Psoas muscle (tissue), 8 donors: ENCODE measurements at regions of chr2 and their contacts with region 1.

Region 1: DNA sequence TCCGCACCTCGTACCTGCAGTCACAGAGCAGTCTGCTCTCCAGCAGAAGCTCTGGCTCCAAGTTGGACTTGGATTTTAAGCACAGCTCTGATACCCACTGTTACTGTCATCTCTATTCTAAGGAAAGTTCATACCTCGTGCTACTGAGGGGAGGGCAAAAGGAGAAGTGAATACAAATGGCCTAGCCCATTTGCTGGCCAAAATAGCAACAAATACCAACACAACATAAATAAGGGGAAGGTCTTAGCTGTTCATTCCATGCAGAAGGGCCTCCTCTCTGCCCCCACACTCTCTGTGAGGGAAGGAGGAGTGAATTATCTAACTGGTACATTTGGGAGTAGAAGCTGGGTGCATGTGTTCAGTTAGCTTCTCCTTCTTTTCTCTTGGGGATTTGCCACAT is 739.4 kb upstream of the RAB6C start:
- DNase-seq: no peak
- ATAC-seq: peak in 3 of 4 donors; percentile 17 to 50 (median 45)
- H3K4me3 ChIP-seq: no peak overlapping the region
- H3K27ac ChIP-seq: peak overlapping the region; percentile 55
- H3K4me1 ChIP-seq: peaks cover 11% of the 10 kb centered on the region
- H3K27me3 ChIP-seq: no peaks in the 10 kb centered on the region
- CTCF ChIP-seq: no peak

Region 2: GRCh38 chr2:128791120-128791984 is 448.7 kb before region 1 on chr2:
- intact Hi-C with region 1: loop called in 1 of 2 experiments (anchors 5 kb)
- DNase-seq: no peak
- ATAC-seq: peak in 3 of 4 donors; percentile 16 to 26 (median 20)
- H3K4me3 ChIP-seq: no peak overlapping the region
- H3K27ac ChIP-seq: no peak overlapping the region
- H3K4me1 ChIP-seq: no peaks in the 10 kb centered on the region
- H3K27me3 ChIP-seq: no peaks in the 10 kb centered on the region
- CTCF ChIP-seq: no peak

Region 3: DNA sequence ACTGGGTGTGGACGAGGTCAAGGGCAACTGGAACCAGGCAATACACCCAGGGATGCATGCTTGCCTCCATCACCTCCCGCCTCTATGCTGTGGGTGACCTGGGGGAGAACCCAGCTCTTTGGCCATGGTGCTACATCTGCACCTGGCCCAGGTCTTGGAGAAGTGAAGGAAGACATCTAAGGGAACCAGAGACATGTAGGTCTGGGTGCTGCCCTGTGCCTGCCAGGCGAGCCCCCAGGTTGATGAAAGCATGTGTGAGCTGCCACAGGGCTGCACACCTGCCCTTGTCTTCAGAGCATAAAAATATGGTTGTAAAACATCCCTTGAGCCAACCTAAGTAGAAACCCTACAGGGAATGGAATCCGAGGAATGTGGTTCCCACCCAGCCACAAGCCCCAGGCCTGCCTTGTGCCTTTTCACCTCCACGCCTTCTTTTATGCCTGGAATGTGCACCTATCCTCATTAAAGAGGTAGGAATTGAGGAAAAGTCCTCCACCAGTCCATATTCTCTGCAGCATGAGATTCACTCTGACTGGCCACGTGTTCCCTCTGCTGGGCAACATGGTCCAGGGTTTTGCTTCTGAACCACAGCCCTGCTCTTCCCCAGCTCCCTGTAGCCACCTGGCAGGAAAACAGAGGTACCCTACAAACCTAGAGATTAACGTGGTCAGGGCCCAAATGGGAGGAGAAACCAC is 48.7 kb before region 1 on chr2:
- intact Hi-C with region 1: no loop called
- DNase-seq: no peak
- ATAC-seq: no peak
- H3K4me3 ChIP-seq: no peak overlapping the region
- H3K27ac ChIP-seq: no peak overlapping the region
- H3K4me1 ChIP-seq: no peaks in the 10 kb centered on the region
- H3K27me3 ChIP-seq: no peaks in the 10 kb centered on the region
- CTCF ChIP-seq: no peak